Mammary epithelial cell (primary cell): ENCODE measurements at regions of chr10 and their contacts with region 1.

Region 1: GRCh38 chr10:6314620-6315205 is 112.0 kb downstream of the PFKFB3 start:
- DNase-seq: no peak
- H3K4me3 ChIP-seq: no peak overlapping the region
- H3K27ac ChIP-seq: no peak overlapping the region
- H3K4me1 ChIP-seq: peaks cover 4% of the 10 kb centered on the region
- H3K27me3 ChIP-seq: no peaks in the 10 kb centered on the region
- CTCF ChIP-seq: no peak

Region 2: DNA sequence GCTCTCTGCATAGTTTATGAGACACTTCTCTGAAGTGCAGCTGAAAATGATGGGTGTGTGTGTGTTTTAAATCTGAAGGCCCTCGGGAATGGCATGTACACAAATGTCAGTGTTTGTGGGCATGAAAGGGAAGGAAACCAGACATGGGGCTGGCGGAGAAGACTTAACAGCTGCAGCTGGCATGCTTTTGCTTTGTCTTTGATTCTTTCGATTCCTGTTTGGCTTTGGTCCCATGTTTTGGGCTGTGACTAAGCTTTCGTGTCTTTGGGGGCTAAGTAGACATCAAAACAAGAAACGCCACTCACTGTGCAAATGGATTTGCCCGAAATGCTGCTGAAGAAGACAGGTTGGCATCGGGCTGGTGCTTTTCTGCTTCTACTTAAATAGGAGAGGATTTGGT is 67.4 kb after region 1 on chr10:
- CTCF ChIA-PET with region 1: no interaction called
- dilution Hi-C with region 1: loop called (anchors 10 kb)
- in situ Hi-C with region 1: no loop called
- intact Hi-C with region 1: no loop called
- DNase-seq: no peak
- H3K4me3 ChIP-seq: no peak overlapping the region
- H3K27ac ChIP-seq: no peak overlapping the region
- H3K4me1 ChIP-seq: no peaks in the 10 kb centered on the region
- H3K27me3 ChIP-seq: no peaks in the 10 kb centered on the region
- CTCF ChIP-seq: no peak

Region 3: DNA sequence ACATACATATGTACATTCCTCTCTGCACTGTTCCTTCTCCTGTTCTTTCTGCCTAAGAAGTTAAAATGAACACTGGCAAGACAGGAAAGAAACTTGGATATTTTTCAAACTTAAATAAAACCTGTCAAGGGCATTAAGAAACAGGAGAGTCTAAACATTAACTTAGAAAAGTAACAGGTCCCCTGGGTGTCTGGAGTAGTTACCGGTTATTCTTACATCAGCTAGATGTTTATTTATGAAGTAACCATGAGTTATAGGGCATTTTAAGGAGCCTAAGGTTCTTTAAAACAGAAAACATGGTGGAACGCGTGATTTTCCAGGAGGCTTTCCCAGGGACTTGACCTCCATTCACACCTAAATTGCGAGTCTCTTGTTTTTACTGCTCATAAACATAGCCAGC is 117.1 kb after region 1 on chr10:
- CTCF ChIA-PET with region 1: no interaction called
- dilution Hi-C with region 1: no loop called
- in situ Hi-C with region 1: no loop called
- intact Hi-C with region 1: no loop called
- DNase-seq: no peak
- H3K4me3 ChIP-seq: no peak overlapping the region
- H3K27ac ChIP-seq: no peak overlapping the region
- H3K4me1 ChIP-seq: no peaks in the 10 kb centered on the region
- H3K27me3 ChIP-seq: no peaks in the 10 kb centered on the region
- CTCF ChIP-seq: no peak